ENCODE measurements at regions of chr16 and their contacts with region 1.

Region 1: GRCh38 chr16:70470927-70471341 is 16.5 kb downstream of the FCSK start:
- DNase-seq: peak in 2 of 3 donors; percentile 5 to 32
- H3K4me3 ChIP-seq: no peak overlapping the region
- H3K4me3 Mint-ChIP-seq: no peak overlapping the region
- H3K27ac ChIP-seq: peak overlapping the region in 1 of 2 donors; percentile 36
- H3K27ac Mint-ChIP-seq: no peak overlapping the region
- H3K4me1 ChIP-seq: peaks cover 13 to 14% of the 10 kb centered on the region in 2 donors
- H3K4me1 Mint-ChIP-seq: peaks cover 13% of the 10 kb centered on the region
- H3K27me3 ChIP-seq: no peaks in the 10 kb centered on the region
- H3K27me3 Mint-ChIP-seq: no peaks in the 10 kb centered on the region
- CTCF ChIP-seq: peak; percentile 54

Region 2: DNA sequence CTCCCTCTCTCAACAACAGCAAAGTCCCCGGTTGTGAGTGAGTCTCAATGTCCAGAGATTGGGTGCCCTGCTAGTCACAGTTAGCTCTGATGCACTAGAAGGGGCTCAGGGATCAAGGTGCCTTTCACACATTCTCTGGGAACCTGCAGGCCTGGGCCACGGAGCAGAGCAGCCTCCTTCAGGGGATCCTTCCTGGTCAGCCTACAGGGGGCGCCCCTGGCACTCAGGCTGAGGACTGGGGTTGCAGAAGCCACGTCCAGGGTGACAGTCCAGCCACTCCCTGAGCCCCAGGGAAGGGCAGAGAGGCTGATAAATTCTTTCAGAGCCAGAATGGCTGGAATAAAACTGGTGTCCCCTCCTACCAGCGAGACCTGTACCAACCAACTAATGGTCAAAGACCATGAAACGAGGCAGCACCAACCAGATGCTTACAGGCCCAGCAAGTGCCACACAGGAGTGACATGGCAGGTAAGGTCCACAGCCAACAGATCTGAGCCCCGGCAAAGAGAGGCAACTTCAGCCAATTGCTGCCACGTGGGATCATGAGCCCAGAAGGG is 75.5 kb before region 1 on chr16:
- intact Hi-C with region 1: loop called in 1 of 2 experiments (anchors 2 kb)
- DNase-seq: peak; percentile 61 to 72 (median 68)
- H3K4me3 ChIP-seq: no peak overlapping the region
- H3K4me3 Mint-ChIP-seq: no peak overlapping the region
- H3K27ac ChIP-seq: no peak overlapping the region
- H3K27ac Mint-ChIP-seq: peak overlapping the region in 1 of 7 donors; percentile 58
- H3K4me1 ChIP-seq: peaks cover 0 to 4% of the 10 kb centered on the region in 2 donors
- H3K4me1 Mint-ChIP-seq: peaks cover 4% of the 10 kb centered on the region
- H3K27me3 ChIP-seq: no peaks in the 10 kb centered on the region
- H3K27me3 Mint-ChIP-seq: peaks cover 0 to 2% (median 2%) of the 10 kb centered on the region in 3 donors
- CTCF ChIP-seq: peak; percentile 83